CD4-positive, alpha-beta T cell (primary cell): ENCODE measurements at regions of chr19 and their contacts with region 1.

Region 1: GRCh38 chr19:16324384-16325160 is at the start of gene KLF2:
- DNase-seq: peak; percentile 91 to 99 (median 94)
- ATAC-seq: peak; percentile 55
- H3K4me3 ChIP-seq: peak within 1 kb of the TSS; percentile 98
- H3K4me3 Mint-ChIP-seq: peak within 1 kb of the TSS; percentile 83
- H3K27ac ChIP-seq: peak within 1 kb of the TSS; percentile 90 to 100
- H3K27ac Mint-ChIP-seq: peak within 1 kb of the TSS; percentile 97
- H3K4me1 ChIP-seq: peaks cover 42% of the 10 kb centered on the region
- H3K4me1 Mint-ChIP-seq: peaks cover 60% of the 10 kb centered on the region
- H3K27me3 ChIP-seq: no peaks in the 10 kb centered on the region
- H3K27me3 Mint-ChIP-seq: peaks cover 24% of the 10 kb centered on the region
- CTCF ChIP-seq: no peak
- total RNA-seq, gene KLF2: 1,201 to 1,291 TPM

Region 2: GRCh38 chr19:16197622-16198369 is 126.8 kb before region 1 on chr19 and contains the start of gene AP1M1:
- CTCF ChIA-PET with region 1: no interaction called
- POLR2A ChIA-PET with region 1: interaction called, 10 read pairs
- intact Hi-C with region 1: loop called in 1 of 2 experiments (anchors 5 kb)
- DNase-seq: peak; percentile 96 to 99 (median 99)
- ATAC-seq: peak; percentile 87
- H3K4me3 ChIP-seq: peak within 1 kb of the TSS; percentile 90
- H3K4me3 Mint-ChIP-seq: peak within 1 kb of the TSS; percentile 95
- H3K27ac ChIP-seq: peak within 1 kb of the TSS; percentile 69 to 81
- H3K27ac Mint-ChIP-seq: peak within 1 kb of the TSS; percentile 92
- H3K4me1 ChIP-seq: peaks cover 35% of the 10 kb centered on the region
- H3K4me1 Mint-ChIP-seq: peaks cover 37% of the 10 kb centered on the region
- H3K27me3 ChIP-seq: no peaks in the 10 kb centered on the region
- H3K27me3 Mint-ChIP-seq: no peaks in the 10 kb centered on the region
- CTCF ChIP-seq: peak; percentile 6
- total RNA-seq, gene AP1M1: 52.1 to 58.3 TPM

Region 3: DNA sequence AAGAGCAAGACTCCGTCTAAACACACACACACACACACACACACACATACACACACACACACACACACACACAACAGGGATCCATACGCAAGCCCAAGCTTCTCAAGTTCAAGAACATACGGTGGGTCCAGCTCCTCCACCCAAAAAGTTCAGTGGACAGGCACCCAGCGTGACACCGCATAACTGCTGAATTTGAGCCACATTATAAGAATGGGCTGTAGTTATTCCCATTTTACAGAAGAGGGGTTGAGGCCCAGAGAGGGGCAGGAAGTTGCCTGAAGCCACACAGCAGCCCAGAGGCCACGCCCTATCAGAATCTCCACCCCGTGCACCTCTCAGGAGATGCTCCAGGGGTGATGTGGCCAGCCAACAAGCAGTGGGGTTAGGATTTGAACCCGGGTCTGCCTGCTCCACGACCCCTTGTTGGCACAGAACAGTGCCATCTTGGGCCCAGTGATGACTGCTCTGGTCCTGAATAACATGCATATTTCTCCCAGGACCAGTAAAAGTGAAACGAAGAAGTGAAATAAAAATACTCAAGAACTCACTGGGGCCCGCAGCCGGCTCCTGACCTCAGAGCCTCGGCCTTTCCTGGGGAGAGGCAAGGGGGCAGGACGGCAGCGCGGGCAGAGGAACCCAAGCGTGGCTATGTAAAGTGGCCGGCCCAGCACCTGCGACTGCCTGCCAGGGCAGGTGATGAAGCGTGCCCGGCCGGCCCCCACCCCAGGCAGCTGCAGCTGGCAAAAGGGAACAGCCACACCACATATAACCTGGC is 65.0 kb before region 1 on chr19:
- CTCF ChIA-PET with region 1: interaction called, 3 read pairs
- POLR2A ChIA-PET with region 1: interaction called, 8 read pairs
- intact Hi-C with region 1: loop called in 1 of 2 experiments (anchors 5 kb)
- DNase-seq: peak in 2 of 14 experiments; percentile 22 to 39
- ATAC-seq: no peak
- H3K4me3 ChIP-seq: no peak overlapping the region
- H3K4me3 Mint-ChIP-seq: no peak overlapping the region
- H3K27ac ChIP-seq: no peak overlapping the region
- H3K27ac Mint-ChIP-seq: no peak overlapping the region
- H3K4me1 ChIP-seq: peaks cover 75% of the 10 kb centered on the region
- H3K4me1 Mint-ChIP-seq: peaks cover 46% of the 10 kb centered on the region
- H3K27me3 ChIP-seq: no peaks in the 10 kb centered on the region
- H3K27me3 Mint-ChIP-seq: no peaks in the 10 kb centered on the region
- CTCF ChIP-seq: no peak

Region 4: DNA sequence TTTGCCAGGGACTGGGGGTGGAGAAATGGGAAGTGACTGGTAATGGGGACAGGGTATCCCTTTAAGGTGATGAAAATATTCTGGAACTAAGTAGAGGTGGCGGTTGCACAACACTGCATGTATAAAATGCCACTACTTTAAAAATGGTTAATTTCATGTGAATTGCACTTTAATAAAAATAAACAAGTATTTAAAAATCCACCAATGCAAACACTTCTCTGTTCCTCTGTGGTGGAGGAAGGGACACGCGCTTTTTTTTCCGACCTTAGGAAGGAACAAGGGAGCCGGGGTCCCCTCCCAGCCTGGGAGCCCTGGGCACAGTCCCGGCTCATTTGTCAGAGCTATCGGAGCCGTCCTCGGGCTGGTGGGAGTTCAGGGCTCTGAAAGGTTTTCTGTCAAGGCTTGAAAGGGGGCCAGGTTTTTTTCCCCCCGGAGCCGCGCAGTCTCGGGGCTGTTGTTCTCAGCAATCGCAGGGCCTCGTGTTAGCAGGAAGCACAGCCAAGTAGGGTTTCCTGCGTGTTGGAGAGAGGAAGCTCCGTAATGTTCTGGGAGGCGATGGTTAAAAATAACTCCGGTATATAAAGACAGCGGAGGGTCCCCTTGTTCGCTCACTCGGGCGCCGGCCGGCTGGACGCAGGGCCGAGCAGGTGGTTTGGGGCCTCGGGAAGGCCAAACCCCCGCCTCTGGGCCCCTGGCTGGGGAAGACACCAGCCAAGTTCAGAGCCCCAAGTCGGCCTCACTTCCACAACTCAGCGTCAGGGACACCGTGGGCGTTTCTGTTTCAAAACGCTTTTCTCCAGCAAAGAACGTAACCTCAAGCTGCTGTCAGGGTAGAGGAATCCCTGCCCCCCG is 41.1 kb before region 1 on chr19:
- CTCF ChIA-PET with region 1: no interaction called
- POLR2A ChIA-PET with region 1: interaction called, 23 read pairs
- intact Hi-C with region 1: loop called (anchors 5 kb)
- DNase-seq: peak; percentile 22 to 75 (median 52)
- ATAC-seq: peak; percentile 86
- H3K4me3 ChIP-seq: peak overlapping the region; percentile 46
- H3K4me3 Mint-ChIP-seq: peak overlapping the region; percentile 67
- H3K27ac ChIP-seq: peak overlapping the region; percentile 43 to 77
- H3K27ac Mint-ChIP-seq: peak overlapping the region; percentile 67
- H3K4me1 ChIP-seq: peaks cover 42% of the 10 kb centered on the region
- H3K4me1 Mint-ChIP-seq: peaks cover 47% of the 10 kb centered on the region
- H3K27me3 ChIP-seq: peaks cover 0 to 2% of the 10 kb centered on the region in 2 experiments
- H3K27me3 Mint-ChIP-seq: no peaks in the 10 kb centered on the region
- CTCF ChIP-seq: no peak

Region 5: GRCh38 chr19:16382775-16383543 is 58.4 kb after region 1 on chr19:
- CTCF ChIA-PET with region 1: interaction called, 45 read pairs
- POLR2A ChIA-PET with region 1: interaction called, 3,819 read pairs
- intact Hi-C with region 1: loop called in 1 of 2 experiments (anchors 1 kb)
- DNase-seq: peak; percentile 69 to 90 (median 82)
- ATAC-seq: peak; percentile 81
- H3K4me3 ChIP-seq: peak overlapping the region; percentile 19
- H3K4me3 Mint-ChIP-seq: peak overlapping the region; percentile 76
- H3K27ac ChIP-seq: peak overlapping the region; percentile 16 to 67
- H3K27ac Mint-ChIP-seq: no peak overlapping the region
- H3K4me1 ChIP-seq: peaks cover 82% of the 10 kb centered on the region
- H3K4me1 Mint-ChIP-seq: peaks cover 62% of the 10 kb centered on the region
- H3K27me3 ChIP-seq: no peaks in the 10 kb centered on the region
- H3K27me3 Mint-ChIP-seq: no peaks in the 10 kb centered on the region
- CTCF ChIP-seq: peak; percentile 92

Region 6: GRCh38 chr19:16751733-16752132 is 427.2 kb after region 1 on chr19:
- CTCF ChIA-PET with region 1: no interaction called
- POLR2A ChIA-PET with region 1: no interaction called
- intact Hi-C with region 1: no loop called
- DNase-seq: no peak
- ATAC-seq: no peak
- H3K4me3 ChIP-seq: no peak overlapping the region
- H3K4me3 Mint-ChIP-seq: no peak overlapping the region
- H3K27ac ChIP-seq: no peak overlapping the region
- H3K27ac Mint-ChIP-seq: no peak overlapping the region
- H3K4me1 ChIP-seq: no peaks in the 10 kb centered on the region
- H3K4me1 Mint-ChIP-seq: no peaks in the 10 kb centered on the region
- H3K27me3 ChIP-seq: peaks cover 0 to 4% of the 10 kb centered on the region in 2 experiments
- H3K27me3 Mint-ChIP-seq: peaks cover 16% of the 10 kb centered on the region
- CTCF ChIP-seq: no peak